Activated B cell treated with CpG ODN at 0.5 μM for 24 hours (primary cell): ENCODE measurements at regions of chr3 and their contacts with region 1.

Region 1: DNA sequence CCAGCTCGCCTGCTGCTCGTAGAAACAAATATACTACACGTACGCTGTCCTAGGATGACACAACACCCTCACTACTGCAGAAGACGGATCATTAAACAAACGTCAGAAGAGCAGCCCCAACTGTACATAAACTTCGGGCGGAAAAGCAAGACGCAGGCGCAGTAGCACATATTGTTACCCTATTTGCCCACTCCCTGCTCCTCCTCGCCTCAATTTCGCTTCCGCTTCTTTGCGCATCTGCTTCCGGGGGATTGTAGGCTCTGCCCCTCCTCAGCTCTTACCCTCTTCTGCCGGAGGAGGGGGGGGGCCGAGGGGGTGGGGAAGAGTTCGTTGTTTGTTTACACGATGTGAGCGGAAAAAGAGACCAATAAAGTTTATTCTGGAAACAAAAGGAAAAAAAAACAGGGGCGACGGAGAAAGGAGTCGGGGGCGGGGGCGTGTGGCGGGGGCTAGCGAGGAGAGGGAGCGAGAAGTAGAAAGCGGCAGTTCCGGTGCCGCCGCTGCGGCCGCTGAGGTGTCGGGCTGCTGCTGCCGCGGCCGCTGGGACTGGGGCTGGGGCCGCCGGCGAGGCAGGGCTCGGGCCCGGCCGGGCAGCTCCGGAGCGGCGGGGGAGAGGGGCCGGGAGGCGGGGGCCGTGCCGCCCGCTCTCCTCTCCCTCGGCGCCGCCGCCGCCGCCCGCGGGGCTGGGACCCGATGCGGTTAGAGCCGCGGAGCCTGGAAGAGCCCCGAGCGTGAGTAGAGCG is at the start of gene PIK3CA:
- DNase-seq: peak; percentile 78
- ATAC-seq: peak; percentile 74
- H3K4me3 Mint-ChIP-seq: peak within 1 kb of the TSS; percentile 94
- H3K27ac Mint-ChIP-seq: peak within 1 kb of the TSS; percentile 95
- H3K4me1 Mint-ChIP-seq: peaks cover 37% of the 10 kb centered on the region
- H3K27me3 Mint-ChIP-seq: no peaks in the 10 kb centered on the region
- CTCF ChIP-seq: no peak
- total RNA-seq, gene PIK3CA: 32.6 and 40.5 TPM in 2 replicates

Region 2: DNA sequence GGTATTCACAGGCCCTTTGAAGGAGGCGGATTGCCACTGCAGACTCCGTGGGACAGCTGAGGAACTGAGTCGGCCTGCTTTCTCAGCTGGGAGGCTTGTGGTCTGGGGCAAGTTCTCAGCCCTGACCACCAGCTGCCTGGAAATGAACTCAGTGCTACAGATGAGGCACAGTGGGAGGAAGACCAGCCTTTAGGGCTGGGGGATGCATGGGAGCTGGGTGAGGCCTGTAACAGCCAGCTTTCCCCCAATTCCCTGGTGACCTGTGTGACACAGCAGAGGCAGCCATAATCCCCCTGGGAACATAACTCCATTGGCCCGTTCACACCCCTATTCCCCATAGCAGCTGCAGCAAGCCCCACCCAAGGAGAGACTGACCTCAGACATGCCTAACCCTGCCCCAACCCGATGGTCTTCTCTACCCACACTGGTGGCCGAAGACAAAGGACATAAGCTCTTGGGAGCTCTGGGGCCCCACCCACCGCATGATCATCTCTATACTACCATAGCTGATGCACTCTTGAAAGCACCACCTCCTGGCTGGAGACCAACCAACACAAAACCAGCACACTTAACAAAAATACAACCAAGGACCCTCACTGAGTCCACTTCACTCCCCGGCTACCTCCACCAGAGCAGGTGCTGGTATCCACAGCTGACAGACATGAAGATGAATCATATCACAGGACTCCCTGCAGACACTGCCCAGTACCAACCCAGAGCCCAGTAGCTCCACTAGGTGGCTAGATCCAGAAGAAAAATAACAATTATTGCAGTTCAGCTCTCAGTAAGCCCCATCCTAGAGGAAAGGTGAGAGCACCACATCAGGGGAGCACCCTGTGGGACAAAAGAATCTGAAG is 101.3 kb before region 1 on chr3:
- CTCF ChIA-PET with region 1: interaction called, 5 read pairs
- POLR2A ChIA-PET with region 1: interaction called, 17 read pairs
- intact Hi-C with region 1: loop called (anchors 1 kb)
- DNase-seq: peak; percentile 54
- ATAC-seq: peak; percentile 88
- H3K4me3 Mint-ChIP-seq: peak overlapping the region; percentile 75
- H3K27ac Mint-ChIP-seq: peak overlapping the region; percentile 87
- H3K4me1 Mint-ChIP-seq: peaks cover 63% of the 10 kb centered on the region
- H3K27me3 Mint-ChIP-seq: no peaks in the 10 kb centered on the region
- CTCF ChIP-seq: no peak

Region 3: GRCh38 chr3:179166561-179167201 is 18.6 kb after region 1 on chr3:
- CTCF ChIA-PET with region 1: interaction called, 5 read pairs
- POLR2A ChIA-PET with region 1: interaction called, 15 read pairs
- intact Hi-C with region 1: loop called (anchors 1 kb)
- DNase-seq: no peak
- ATAC-seq: no peak
- H3K4me3 Mint-ChIP-seq: peak overlapping the region; percentile 35
- H3K27ac Mint-ChIP-seq: no peak overlapping the region
- H3K4me1 Mint-ChIP-seq: peaks cover 74% of the 10 kb centered on the region
- H3K27me3 Mint-ChIP-seq: no peaks in the 10 kb centered on the region
- CTCF ChIP-seq: no peak

Region 4: DNA sequence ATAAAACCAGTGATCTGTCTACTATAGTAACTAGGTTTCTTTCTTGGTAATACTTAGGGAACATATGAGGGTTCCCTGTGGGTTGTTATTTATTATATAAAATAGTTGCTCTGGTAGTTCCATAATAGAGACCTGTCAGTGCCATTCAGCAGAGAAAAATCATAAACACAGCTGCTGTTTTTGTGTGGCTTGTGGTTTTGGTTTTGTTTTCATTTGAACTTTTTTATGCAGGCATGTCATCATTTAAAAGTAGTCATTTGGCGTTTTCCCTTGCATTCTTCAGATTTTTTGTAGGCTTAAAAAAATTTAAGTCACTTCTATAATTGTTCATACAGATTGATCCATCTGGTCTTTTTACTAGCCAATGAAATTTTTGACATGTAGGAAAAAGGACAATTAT is 48.1 kb after region 1 on chr3:
- CTCF ChIA-PET with region 1: interaction called, 3 read pairs
- POLR2A ChIA-PET with region 1: interaction called, 4 read pairs
- intact Hi-C with region 1: loop called (anchors 1 kb)
- DNase-seq: no peak
- ATAC-seq: peak; percentile 25
- H3K4me3 Mint-ChIP-seq: no peak overlapping the region
- H3K27ac Mint-ChIP-seq: no peak overlapping the region
- H3K4me1 Mint-ChIP-seq: peaks cover 47% of the 10 kb centered on the region
- H3K27me3 Mint-ChIP-seq: no peaks in the 10 kb centered on the region
- CTCF ChIP-seq: no peak

Region 5: GRCh38 chr3:179309225-179310078 is 161.4 kb after region 1 on chr3:
- CTCF ChIA-PET with region 1: interaction called, 12 read pairs
- POLR2A ChIA-PET with region 1: interaction called, 19 read pairs
- intact Hi-C with region 1: loop called (anchors 1 kb)
- DNase-seq: no peak
- ATAC-seq: peak; percentile 92
- H3K4me3 Mint-ChIP-seq: no peak overlapping the region
- H3K27ac Mint-ChIP-seq: no peak overlapping the region
- H3K4me1 Mint-ChIP-seq: peaks cover 9% of the 10 kb centered on the region
- H3K27me3 Mint-ChIP-seq: no peaks in the 10 kb centered on the region
- CTCF ChIP-seq: no peak

Region 6: GRCh38 chr3:179451265-179452175 is 303.5 kb after region 1 on chr3 and contains the start of gene GNB4:
- CTCF ChIA-PET with region 1: no interaction called
- POLR2A ChIA-PET with region 1: interaction called, 8 read pairs
- intact Hi-C with region 1: loop called (anchors 2 kb)
- DNase-seq: peak; percentile 74
- ATAC-seq: peak; percentile 88
- H3K4me3 Mint-ChIP-seq: peak within 1 kb of the TSS; percentile 92
- H3K27ac Mint-ChIP-seq: peak within 1 kb of the TSS; percentile 93
- H3K4me1 Mint-ChIP-seq: peaks cover 35% of the 10 kb centered on the region
- H3K27me3 Mint-ChIP-seq: no peaks in the 10 kb centered on the region
- CTCF ChIP-seq: no peak
- total RNA-seq, gene GNB4: 18.0 and 22.7 TPM in 2 replicates

Region 7: GRCh38 chr3:179653096-179653797 is 505.2 kb after region 1 on chr3:
- CTCF ChIA-PET with region 1: no interaction called
- POLR2A ChIA-PET with region 1: no interaction called
- intact Hi-C with region 1: loop called (anchors 2 kb)
- DNase-seq: peak; percentile 66
- ATAC-seq: peak; percentile 38
- H3K4me3 Mint-ChIP-seq: peak overlapping the region; percentile 91
- H3K27ac Mint-ChIP-seq: peak overlapping the region; percentile 87
- H3K4me1 Mint-ChIP-seq: peaks cover 25% of the 10 kb centered on the region
- H3K27me3 Mint-ChIP-seq: no peaks in the 10 kb centered on the region
- CTCF ChIP-seq: no peak